ENCODE measurements at regions of chr17 and their contacts with region 1.

Region 1: GRCh38 chr17:43483674-43484372 is at the start of gene DHX8:
- DNase-seq: peak; percentile 98
- H3K4me3 ChIP-seq: peak within 1 kb of the TSS; percentile 67 to 78 (median 71)
- H3K27ac ChIP-seq: peak within 1 kb of the TSS; percentile 82 to 89 (median 85)
- H3K4me1 ChIP-seq: peaks cover 0 to 34% (median 26%) of the 10 kb centered on the region in 4 donors
- H3K27me3 ChIP-seq: no peaks in the 10 kb centered on the region
- CTCF ChIP-seq: peak; percentile 100
- EP300 ChIP-seq: peak in 2 of 4 donors; percentile 7 to 21
- POLR2A ChIP-seq: peak; percentile 65 to 72
- total RNA-seq, gene DHX8: 19.8 to 39.6 (median 26.5) TPM

Region 2: DNA sequence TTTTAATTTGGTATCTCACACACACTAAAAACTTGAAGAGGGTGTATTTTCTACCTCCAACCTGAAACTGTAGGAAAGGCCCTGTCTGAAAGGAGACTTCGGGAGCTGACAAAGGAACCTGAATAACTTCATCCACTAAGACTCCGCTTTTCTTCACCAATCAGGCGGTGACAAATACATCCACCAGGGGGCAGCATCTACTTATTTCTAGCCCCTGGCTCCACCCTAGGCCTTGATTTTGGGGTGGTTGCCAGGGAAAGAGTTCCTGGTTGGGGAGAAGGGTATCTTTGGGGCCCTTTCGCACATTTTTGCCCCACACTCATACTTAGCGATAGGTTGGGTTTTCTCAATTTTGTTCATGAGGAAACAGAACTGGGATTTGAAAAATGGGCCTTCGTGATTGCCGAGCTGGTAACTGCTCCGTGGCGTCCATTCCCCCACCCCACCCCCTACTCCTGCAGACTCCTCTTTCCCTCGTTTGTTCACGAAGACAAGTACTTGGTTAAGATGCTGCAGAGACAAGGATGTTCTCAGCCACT is 89.8 kb before region 1 on chr17:
- intact Hi-C with region 1: loop called (anchors 1 kb)
- DNase-seq: peak; percentile 97
- H3K4me3 ChIP-seq: peak overlapping the region in 3 of 4 donors; percentile 17 to 29 (median 28)
- H3K27ac ChIP-seq: peak overlapping the region; percentile 59 to 77 (median 76)
- H3K4me1 ChIP-seq: peaks cover 6 to 27% (median 19%) of the 10 kb centered on the region in 4 donors
- H3K27me3 ChIP-seq: no peaks in the 10 kb centered on the region
- CTCF ChIP-seq: peak; percentile 84 to 99 (median 97)
- EP300 ChIP-seq: no peak
- POLR2A ChIP-seq: no peak

Region 3: DNA sequence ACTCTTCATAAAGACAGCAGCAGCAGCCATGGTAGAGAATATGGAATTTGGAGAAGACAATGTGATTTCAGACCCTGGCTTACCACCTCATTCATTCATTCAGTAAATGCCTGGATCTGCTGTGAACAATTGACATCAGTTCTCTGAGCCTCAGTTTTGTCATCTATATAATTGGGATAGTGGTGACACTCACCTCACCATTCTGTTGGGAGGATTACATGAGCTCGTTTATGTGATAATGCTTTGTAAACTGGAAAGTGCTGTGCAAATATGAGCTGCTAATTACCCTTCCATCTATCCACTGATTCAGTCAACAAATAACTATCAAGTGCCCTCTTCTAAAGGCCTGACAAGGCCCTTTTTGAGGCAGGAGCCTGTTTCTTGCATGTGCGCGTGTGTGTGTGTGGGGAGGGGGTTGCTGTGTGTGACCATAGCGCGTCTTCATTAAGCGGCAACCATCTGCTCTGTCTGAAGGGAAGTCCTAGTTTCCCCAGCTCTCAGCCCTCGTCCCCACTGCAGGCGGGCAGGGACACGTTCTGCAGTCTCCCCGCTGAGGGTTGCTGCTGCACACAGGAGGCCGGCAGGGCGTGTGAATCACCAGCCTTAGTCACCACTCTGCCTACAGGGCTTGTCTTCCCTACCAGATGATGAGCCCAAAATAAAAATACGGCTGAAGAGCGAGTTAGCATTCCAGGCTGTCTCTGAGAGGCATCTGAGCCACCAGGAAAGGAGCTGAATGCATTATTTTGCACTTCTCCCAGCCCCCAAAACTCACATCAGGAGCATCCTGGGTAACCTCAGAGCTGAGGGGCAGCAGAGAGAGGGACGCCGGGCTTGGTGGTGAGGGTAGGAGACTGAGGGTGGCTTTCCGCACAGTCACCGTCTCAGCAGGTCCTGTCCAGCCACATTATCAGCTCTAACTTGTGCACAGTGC is 65.1 kb before region 1 on chr17:
- intact Hi-C with region 1: loop called (anchors 2 kb)
- DNase-seq: peak; percentile 92
- H3K4me3 ChIP-seq: no peak overlapping the region
- H3K27ac ChIP-seq: peak overlapping the region; percentile 86 to 94 (median 90)
- H3K4me1 ChIP-seq: peaks cover 0 to 41% (median 38%) of the 10 kb centered on the region in 4 donors
- H3K27me3 ChIP-seq: no peaks in the 10 kb centered on the region
- CTCF ChIP-seq: no peak
- EP300 ChIP-seq: no peak
- POLR2A ChIP-seq: peak; percentile 32 to 59

Region 4: GRCh38 chr17:43431714-43432523 is 51.9 kb before region 1 on chr17:
- intact Hi-C with region 1: loop called (anchors 5 kb)
- DNase-seq: peak; percentile 75
- H3K4me3 ChIP-seq: no peak overlapping the region
- H3K27ac ChIP-seq: peak overlapping the region in 2 of 4 donors; percentile 1 to 55
- H3K4me1 ChIP-seq: peaks cover 0 to 12% (median 9%) of the 10 kb centered on the region in 4 donors
- H3K27me3 ChIP-seq: no peaks in the 10 kb centered on the region
- CTCF ChIP-seq: no peak
- EP300 ChIP-seq: no peak
- POLR2A ChIP-seq: no peak